Thyroid gland (tissue), 4 donors: ENCODE measurements at regions of chr5 and their contacts with region 1.

Region 1: DNA sequence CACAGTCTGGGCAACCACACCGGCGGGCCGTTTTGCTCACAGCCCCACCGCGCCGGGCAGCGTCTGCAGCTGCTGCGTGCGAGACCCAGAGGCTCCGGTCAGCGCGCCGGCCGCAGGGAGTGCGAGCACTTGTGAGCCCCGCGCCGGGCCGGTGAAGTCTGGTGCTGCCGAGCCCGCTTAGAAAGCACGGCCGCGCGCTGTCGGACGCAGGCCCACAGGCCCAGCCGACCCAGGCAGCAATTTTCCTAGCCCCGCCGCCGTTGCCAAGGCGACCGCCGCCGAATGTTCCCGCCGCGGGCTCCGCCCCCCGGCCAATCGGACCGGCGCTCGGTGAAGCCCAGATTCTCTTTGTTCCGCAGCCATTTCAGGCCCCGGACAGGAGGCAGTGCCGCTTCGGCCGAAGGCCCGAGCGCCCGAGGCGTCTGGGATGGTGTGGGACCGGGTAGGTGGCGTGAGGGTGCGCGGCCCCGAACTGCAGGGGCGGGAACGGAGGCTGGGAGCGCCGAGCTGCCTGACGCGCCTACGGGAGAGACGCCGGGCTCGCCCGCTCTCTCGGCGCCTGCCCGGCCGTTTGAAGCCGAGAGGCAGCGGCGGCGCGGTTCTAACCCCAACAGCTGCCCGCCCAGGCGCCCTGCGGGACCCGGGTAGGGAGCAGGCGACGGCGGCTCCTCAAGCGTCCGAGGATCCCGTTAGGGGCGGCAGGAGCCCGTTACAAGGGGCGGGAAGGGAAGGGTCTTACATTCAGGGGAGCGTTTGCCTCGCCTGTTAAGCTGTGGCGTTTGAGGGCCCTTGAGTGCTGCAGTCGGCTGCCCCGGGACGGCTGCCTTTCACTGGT is at the start of gene TNPO1:
- DNase-seq: peak; percentile 97
- H3K4me3 ChIP-seq: peak within 1 kb of the TSS; percentile 64 to 70 (median 68)
- H3K27ac ChIP-seq: peak within 1 kb of the TSS; percentile 98 to 99 (median 98)
- H3K4me1 ChIP-seq: peaks cover 19 to 31% of the 10 kb centered on the region in 2 donors
- H3K27me3 ChIP-seq: no peaks in the 10 kb centered on the region
- CTCF ChIP-seq: no peak
- POLR2A ChIP-seq: peak; percentile 51 to 99
- total RNA-seq, gene TNPO1: 122 to 319 (median 206) TPM

Region 2: DNA sequence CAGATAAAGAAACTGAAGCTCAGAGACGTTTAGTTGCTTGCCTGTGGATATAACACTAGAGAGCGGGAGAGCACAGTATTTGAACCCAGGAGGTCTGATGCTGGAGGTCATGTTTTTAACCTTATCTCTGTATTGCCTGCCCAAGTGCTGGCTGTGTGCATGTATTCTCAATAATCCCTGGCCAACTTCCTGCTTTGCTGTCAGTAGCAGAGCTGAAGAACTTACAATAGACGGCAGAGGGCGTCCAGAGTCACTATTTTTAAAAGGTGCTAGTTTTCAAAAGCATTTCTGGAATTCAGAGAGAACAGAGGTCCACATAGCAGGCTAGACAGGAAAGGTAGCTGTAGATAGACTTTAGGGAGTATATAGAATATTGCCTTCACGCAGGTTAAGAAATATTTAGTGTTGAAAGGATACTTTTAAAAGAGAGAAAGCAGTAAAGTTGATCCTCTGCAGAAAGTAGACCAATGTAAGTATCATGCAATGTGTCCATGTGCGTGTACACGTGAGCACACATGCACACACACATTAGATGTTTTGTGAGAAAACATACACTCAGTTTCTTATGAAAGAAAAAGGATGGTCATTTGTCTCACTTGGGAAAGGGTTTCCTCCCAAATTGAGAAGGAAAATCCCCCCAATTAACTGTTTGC is 450.1 kb before region 1 on chr5:
- intact Hi-C with region 1: loop called (anchors 10 kb)
- DNase-seq: peak; percentile 80
- H3K4me3 ChIP-seq: no peak overlapping the region
- H3K27ac ChIP-seq: no peak overlapping the region
- H3K4me1 ChIP-seq: peaks cover 5 to 9% of the 10 kb centered on the region in 2 donors
- H3K27me3 ChIP-seq: no peaks in the 10 kb centered on the region
- CTCF ChIP-seq: peak; percentile 41 to 93 (median 81)
- POLR2A ChIP-seq: no peak

Region 3: GRCh38 chr5:72451741-72452505 is 364.6 kb before region 1 on chr5:
- intact Hi-C with region 1: no loop called
- DNase-seq: peak; percentile 24 to 43
- H3K4me3 ChIP-seq: no peak overlapping the region
- H3K27ac ChIP-seq: peak overlapping the region; percentile 84 to 92 (median 86)
- H3K4me1 ChIP-seq: peaks cover 27 to 50% of the 10 kb centered on the region in 2 donors
- H3K27me3 ChIP-seq: no peaks in the 10 kb centered on the region
- CTCF ChIP-seq: no peak
- POLR2A ChIP-seq: no peak

Region 4: DNA sequence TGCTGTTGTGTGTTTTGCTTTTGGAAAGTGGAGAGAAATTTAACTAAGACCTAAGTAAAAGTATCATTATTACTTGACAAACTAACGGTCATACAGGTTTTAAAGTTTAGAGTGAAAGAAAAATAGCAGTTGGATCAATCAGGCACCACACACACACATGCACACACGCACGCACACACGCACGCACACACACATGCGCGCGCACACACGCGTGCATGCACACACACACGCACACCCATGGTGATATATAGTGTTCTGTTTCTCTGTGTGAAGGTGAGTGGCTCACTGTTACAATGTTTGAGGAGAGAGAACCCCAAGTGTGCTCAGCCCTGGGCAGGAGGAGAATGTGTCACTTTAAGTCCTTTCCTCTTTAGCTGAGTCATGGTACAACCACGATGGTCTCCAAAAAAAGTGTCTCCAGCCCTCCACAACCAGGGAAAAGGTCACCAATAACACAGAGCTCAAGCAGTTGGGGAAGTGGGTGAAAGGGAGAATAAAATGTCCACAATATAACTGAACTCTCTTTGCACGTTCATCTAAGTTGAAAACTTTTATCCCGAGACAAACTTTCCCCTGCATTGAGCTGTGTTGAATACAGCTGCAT is 312.5 kb before region 1 on chr5:
- intact Hi-C with region 1: no loop called
- DNase-seq: peak; percentile 14 to 20
- H3K4me3 ChIP-seq: no peak overlapping the region
- H3K27ac ChIP-seq: peak overlapping the region in 2 of 3 donors; percentile 56
- H3K4me1 ChIP-seq: peaks cover 21 to 45% of the 10 kb centered on the region in 2 donors
- H3K27me3 ChIP-seq: no peaks in the 10 kb centered on the region
- CTCF ChIP-seq: peak in 1 of 6 experiments; percentile 1
- POLR2A ChIP-seq: no peak

Region 5: GRCh38 chr5:72600391-72600981 is 216.0 kb before region 1 on chr5:
- intact Hi-C with region 1: loop called (anchors 10 kb)
- DNase-seq: no peak
- H3K4me3 ChIP-seq: no peak overlapping the region
- H3K27ac ChIP-seq: no peak overlapping the region
- H3K4me1 ChIP-seq: peaks cover 15 to 24% of the 10 kb centered on the region in 2 donors
- H3K27me3 ChIP-seq: no peaks in the 10 kb centered on the region
- CTCF ChIP-seq: no peak
- POLR2A ChIP-seq: no peak